Activated B cell treated with CpG ODN at 0.5 μM for 24 hours (primary cell): ENCODE measurements at regions of chr15 and their contacts with region 1.

Region 1: GRCh38 chr15:20367093-20367492 is 174.5 kb downstream of the GOLGA6L6 start:
- DNase-seq: no peak
- ATAC-seq: no peak
- H3K4me3 Mint-ChIP-seq: no peak overlapping the region
- H3K27ac Mint-ChIP-seq: no peak overlapping the region
- H3K4me1 Mint-ChIP-seq: no peaks in the 10 kb centered on the region
- H3K27me3 Mint-ChIP-seq: no peaks in the 10 kb centered on the region
- CTCF ChIP-seq: no peak

Region 2: GRCh38 chr15:20344601-20345400 is 22.3 kb before region 1 on chr15:
- CTCF ChIA-PET with region 1: no interaction called
- POLR2A ChIA-PET with region 1: no interaction called
- intact Hi-C with region 1: no loop called
- DNase-seq: no peak
- ATAC-seq: no peak
- H3K4me3 Mint-ChIP-seq: no peak overlapping the region
- H3K27ac Mint-ChIP-seq: no peak overlapping the region
- H3K4me1 Mint-ChIP-seq: no peaks in the 10 kb centered on the region
- H3K27me3 Mint-ChIP-seq: peaks cover 2% of the 10 kb centered on the region
- CTCF ChIP-seq: no peak

Region 3: GRCh38 chr15:20386198-20386597 is 19.1 kb after region 1 on chr15:
- CTCF ChIA-PET with region 1: no interaction called
- POLR2A ChIA-PET with region 1: no interaction called
- intact Hi-C with region 1: loop called (anchors 2 kb)
- DNase-seq: no peak
- ATAC-seq: no peak
- H3K4me3 Mint-ChIP-seq: no peak overlapping the region
- H3K27ac Mint-ChIP-seq: no peak overlapping the region
- H3K4me1 Mint-ChIP-seq: no peaks in the 10 kb centered on the region
- H3K27me3 Mint-ChIP-seq: no peaks in the 10 kb centered on the region
- CTCF ChIP-seq: no peak